Tibial artery (tissue), 4 donors: ENCODE measurements at regions of chr9 and their contacts with region 1.

Region 1: DNA sequence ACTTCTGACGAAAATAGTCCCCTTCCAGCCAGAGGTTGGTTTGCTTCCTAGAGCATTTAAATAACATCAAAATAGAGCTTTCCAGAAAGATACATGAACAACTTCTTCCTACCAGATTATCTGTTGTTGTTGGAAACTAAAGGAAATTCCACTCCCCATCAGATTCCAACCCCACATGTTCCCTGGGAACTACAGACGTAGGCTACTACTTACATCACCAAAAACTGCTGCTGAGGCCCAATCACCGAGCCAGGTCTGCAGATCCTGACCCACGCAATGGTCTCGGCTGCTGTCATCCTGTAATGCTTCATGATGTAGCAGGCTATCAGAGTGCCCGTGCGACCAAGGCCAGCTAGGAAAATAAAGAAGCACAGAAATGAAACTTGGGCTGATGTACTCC is 73.4 kb downstream of the HABP4 start:
- DNase-seq: peak; percentile 78 to 93
- H3K4me3 ChIP-seq: peak overlapping the region; percentile 35 to 47
- H3K27ac ChIP-seq: peak overlapping the region; percentile 85 to 86
- H3K4me1 ChIP-seq: peaks cover 6 to 67% (median 31%) of the 10 kb centered on the region in 4 donors
- H3K27me3 ChIP-seq: no peaks in the 10 kb centered on the region
- CTCF ChIP-seq: no peak

Region 2: GRCh38 chr9:96486368-96487028 is 36.9 kb before region 1 on chr9:
- intact Hi-C with region 1: loop called (anchors 5 kb)
- DNase-seq: peak; percentile 79 to 87
- H3K4me3 ChIP-seq: peak overlapping the region in 1 of 2 donors; percentile 16
- H3K27ac ChIP-seq: peak overlapping the region; percentile 81 to 85
- H3K4me1 ChIP-seq: peaks cover 0 to 82% (median 50%) of the 10 kb centered on the region in 4 donors
- H3K27me3 ChIP-seq: no peaks in the 10 kb centered on the region
- CTCF ChIP-seq: no peak